Activated CD4-positive, alpha-beta memory T cell treated with anti-CD3 and anti-CD28 coated beads for 36 hours (primary cell): ENCODE measurements at regions of chrX and their contacts with region 1.

Region 1: DNA sequence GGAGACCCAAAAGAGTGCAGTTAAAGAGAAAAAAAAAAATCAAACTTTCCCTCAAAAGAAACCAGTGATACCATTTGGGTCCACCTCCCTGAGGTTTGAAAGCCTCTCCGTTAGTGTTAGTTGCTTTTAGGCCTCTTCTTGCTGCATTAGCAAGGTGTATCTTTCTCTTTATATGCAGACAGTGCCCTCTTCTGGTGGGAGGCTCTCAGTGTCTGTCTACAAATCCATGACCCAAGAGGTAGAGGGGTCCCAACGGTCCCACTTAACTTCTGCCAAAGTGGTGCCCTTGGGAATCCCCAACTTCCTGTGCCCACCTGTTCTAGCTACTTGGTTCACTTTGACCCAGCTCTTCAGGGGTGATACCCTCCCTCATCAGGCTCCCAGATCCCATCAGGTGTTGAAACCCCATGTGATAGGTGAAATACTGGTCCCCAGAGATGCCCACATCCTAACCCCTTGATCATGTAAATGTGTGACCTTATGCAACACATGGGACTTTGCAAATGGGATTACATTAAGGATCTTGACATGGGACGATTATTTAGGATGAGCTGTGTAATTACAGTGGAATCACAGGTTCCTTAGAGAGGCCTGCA is 63.7 kb upstream of the CD99 start:
- DNase-seq: peak; percentile 60
- H3K4me3 Mint-ChIP-seq: no peak overlapping the region
- H3K27ac Mint-ChIP-seq: peak overlapping the region; percentile 10
- H3K4me1 Mint-ChIP-seq: peaks cover 34% of the 10 kb centered on the region
- H3K27me3 Mint-ChIP-seq: no peaks in the 10 kb centered on the region

Region 2: DNA sequence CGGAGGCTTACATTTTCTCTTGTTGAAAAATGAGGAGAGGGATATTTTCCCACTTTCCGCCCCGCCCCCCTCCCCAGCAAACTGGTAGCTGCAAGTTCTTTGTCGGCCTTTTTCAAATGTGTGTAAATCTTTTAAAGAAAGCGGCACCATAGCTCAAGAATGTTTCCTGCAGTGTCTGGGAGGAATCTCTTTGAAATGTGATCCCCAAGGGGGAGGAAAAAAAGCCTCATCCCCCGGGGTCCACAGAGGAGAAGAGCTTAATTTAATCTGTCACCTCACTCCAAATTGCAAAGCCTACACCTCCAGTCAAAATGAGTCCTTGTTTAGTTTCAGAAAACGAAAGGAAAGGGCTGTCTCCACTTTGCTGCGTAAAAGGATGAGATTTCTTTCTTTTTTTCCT is 977.7 kb before region 1 on chrX:
- CTCF ChIA-PET with region 1: no interaction called
- POLR2A ChIA-PET with region 1: no interaction called
- intact Hi-C with region 1: loop called (anchors 1 kb)
- DNase-seq: no peak
- H3K4me3 Mint-ChIP-seq: no peak overlapping the region
- H3K27ac Mint-ChIP-seq: no peak overlapping the region
- H3K4me1 Mint-ChIP-seq: peaks cover 6% of the 10 kb centered on the region
- H3K27me3 Mint-ChIP-seq: peaks cover 10% of the 10 kb centered on the region

Region 3: DNA sequence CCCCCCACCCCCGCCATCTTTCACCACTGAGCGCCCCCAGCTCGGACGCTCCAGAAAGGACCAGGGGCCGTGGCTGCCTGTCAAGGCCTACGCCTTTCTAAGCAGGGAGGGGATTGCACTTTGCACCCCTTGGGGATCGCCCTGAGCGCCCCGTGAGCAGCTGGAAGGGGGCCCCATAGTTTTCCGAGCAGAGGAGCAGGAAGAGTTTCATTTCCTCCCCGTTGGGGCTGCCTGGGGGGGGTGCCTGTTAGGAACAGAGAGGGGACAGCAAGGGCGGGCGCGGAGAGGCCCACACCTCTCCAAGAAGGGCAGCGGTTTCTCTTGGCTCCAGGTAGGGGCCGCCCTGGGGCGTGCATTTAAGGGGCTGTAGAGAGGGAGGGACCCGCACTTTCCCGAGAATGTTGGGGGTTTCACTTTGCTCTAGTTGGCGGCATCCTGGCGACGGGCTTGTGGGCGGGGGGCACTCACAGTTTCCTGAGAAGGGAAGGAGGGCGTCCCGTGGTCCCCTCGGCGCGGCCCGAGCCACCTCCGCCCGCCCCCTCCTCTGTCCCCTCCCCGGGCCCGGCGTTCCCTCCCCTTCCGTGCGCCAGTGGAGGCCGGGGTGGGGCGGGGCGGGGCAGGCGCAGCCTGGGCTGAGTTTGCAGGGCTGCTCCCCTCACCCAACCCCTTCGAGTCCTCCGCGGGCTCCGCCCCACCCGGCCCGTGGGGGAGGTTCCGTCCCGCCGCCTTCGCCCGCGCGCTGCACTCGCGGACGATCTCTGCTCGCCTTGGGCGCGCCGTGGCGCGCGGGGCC is 18.5 kb before region 1 on chrX:
- CTCF ChIA-PET with region 1: no interaction called
- POLR2A ChIA-PET with region 1: no interaction called
- intact Hi-C with region 1: loop called (anchors 1 kb)
- DNase-seq: peak; percentile 92
- H3K4me3 Mint-ChIP-seq: peak overlapping the region; percentile 82
- H3K27ac Mint-ChIP-seq: peak overlapping the region; percentile 87
- H3K4me1 Mint-ChIP-seq: peaks cover 45% of the 10 kb centered on the region
- H3K27me3 Mint-ChIP-seq: no peaks in the 10 kb centered on the region

Region 4: DNA sequence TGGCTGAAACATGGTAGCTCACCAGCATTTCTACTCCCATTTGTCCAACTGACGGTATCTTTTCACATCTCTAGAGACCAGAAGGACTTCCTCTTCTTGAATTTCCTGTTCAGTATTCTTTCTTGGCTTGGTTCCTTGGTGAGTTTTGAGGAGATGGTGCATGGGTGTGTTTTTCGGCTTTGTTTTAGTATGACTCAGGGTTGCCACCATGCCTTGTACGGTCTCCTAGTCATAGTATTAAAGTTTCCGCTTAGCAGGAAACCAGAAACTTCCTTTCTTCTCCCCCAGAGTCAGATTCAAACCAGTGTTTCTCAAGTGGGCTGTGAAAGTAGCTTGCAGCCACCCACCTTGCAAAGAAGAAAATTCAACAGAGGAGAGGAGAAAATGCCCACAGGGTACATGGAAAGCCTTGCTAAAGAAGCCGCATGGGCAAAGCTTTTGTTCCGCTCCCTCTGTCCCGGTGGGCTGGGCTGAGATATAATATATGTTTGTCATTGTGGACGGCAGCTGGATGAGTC is 69.4 kb after region 1 on chrX:
- CTCF ChIA-PET with region 1: no interaction called
- POLR2A ChIA-PET with region 1: no interaction called
- intact Hi-C with region 1: loop called (anchors 1 kb)
- DNase-seq: peak; percentile 78
- H3K4me3 Mint-ChIP-seq: peak overlapping the region; percentile 86
- H3K27ac Mint-ChIP-seq: peak overlapping the region; percentile 96
- H3K4me1 Mint-ChIP-seq: peaks cover 81% of the 10 kb centered on the region
- H3K27me3 Mint-ChIP-seq: no peaks in the 10 kb centered on the region